PC-3 (cell line): ENCODE measurements at regions of chr2 and their contacts with region 1.

Region 1: DNA sequence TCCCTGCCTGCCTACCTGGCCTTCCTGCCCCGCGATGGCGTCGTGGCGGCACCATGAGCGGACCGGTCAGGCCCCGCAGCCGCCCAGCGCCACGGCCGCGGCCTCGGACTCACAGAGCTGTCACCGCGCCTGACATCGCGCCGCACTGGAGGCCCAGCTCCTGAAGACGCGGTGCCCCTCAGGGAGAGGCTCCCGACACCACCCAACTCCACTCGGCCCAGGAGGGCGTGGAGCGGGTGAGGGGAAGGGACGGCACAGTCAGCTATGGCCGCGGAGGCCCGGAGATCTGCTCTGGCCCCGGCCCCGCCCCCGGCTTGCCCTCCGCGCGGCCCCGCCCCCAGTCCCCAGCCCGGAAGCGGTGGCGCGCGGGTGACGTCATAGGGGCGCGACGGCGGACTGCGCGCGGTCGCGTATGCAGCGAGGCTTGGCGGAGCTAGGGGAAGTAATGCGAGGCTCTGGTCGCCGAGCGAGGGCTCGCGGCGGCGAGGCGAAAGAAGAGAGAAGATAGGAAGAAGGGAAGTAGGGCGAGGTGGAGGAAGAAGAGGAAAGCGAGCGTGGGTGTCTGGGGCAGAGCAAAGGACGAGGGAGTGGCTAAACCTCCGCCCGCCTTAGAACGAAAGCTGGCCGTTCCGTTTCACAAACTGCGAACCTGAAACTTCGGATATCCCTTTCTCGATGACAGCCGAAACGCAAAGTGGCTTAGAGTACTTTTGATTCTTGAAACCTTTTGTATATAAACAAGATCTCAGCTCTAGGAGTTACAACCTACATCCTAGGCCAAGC is at the start of gene SLC35F5:
- DNase-seq: peak; percentile 91
- ATAC-seq: peak; percentile 91
- H3K4me3 ChIP-seq: peak within 1 kb of the TSS; percentile 69
- H3K27ac ChIP-seq: peak within 1 kb of the TSS; percentile 79
- H3K4me1 ChIP-seq: peaks cover 16% of the 10 kb centered on the region
- H3K27me3 ChIP-seq: no peaks in the 10 kb centered on the region
- CTCF ChIP-seq: no peak
- total RNA-seq, gene SLC35F5: 41.1 and 55.3 TPM in 2 replicates

Region 2: DNA sequence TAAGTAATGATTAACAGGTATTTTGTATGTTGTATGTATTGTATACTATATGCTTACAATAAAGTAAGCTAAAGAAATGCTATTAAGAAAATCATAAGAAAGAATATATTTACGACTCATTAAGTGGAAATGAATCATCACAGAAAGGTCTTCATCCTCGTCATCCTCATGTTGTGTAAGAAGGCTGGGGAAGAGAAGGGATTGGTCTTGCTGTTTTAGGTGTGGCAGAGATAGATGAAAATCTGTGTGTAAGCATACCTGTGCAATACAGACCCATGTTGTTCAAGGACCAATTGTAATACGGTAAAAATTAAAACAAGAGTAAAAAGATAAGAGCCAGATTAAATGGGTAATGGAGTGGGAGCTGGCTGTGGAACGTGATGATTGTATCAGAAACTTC is 16.7 kb before region 1 on chr2:
- CTCF ChIA-PET with region 1: no interaction called
- POLR2A ChIA-PET with region 1: no interaction called
- intact Hi-C with region 1: loop called (anchors 1 kb)
- DNase-seq: peak; percentile 35
- ATAC-seq: peak; percentile 33; the same call in 1 of the 2 replicates
- H3K4me3 ChIP-seq: no peak overlapping the region
- H3K27ac ChIP-seq: peak overlapping the region; percentile 30; the same call in 1 of the 2 replicates
- H3K4me1 ChIP-seq: peaks cover 4% of the 10 kb centered on the region
- H3K27me3 ChIP-seq: no peaks in the 10 kb centered on the region
- CTCF ChIP-seq: no peak

Region 3: DNA sequence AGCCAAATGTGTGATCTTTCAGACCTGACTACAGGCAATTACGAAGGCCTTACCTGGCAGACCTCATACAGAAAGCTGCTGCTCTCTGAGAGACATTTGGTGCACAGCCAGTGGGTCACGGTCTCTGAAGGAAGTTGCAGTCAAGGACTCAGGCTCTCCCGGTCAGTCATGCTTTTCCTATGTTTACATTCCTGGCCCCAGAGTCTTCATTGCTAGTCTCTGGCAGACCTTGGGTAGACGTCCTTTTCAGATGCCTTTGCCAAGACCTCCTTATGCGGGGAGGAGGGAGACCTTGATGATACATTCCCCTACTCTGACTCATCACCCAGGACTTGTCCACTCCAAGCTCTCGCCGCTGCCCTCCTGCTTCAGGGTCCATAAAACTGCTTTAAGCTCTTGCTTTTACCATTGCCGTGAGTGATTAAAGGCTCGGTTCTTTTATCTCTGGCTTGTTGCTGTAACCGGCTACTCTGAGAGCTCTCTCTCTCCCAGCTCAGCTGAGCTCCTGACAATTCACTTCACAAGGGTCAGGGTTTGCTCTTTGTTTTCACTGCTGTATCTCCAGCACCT is 61.9 kb after region 1 on chr2:
- CTCF ChIA-PET with region 1: no interaction called
- POLR2A ChIA-PET with region 1: no interaction called
- intact Hi-C with region 1: loop called (anchors 1 kb)
- DNase-seq: peak; percentile 96
- ATAC-seq: peak; percentile 95
- H3K4me3 ChIP-seq: peak overlapping the region; percentile 51
- H3K27ac ChIP-seq: peak overlapping the region; percentile 36
- H3K4me1 ChIP-seq: peaks cover 17% of the 10 kb centered on the region
- H3K27me3 ChIP-seq: no peaks in the 10 kb centered on the region
- CTCF ChIP-seq: no peak

Region 4: DNA sequence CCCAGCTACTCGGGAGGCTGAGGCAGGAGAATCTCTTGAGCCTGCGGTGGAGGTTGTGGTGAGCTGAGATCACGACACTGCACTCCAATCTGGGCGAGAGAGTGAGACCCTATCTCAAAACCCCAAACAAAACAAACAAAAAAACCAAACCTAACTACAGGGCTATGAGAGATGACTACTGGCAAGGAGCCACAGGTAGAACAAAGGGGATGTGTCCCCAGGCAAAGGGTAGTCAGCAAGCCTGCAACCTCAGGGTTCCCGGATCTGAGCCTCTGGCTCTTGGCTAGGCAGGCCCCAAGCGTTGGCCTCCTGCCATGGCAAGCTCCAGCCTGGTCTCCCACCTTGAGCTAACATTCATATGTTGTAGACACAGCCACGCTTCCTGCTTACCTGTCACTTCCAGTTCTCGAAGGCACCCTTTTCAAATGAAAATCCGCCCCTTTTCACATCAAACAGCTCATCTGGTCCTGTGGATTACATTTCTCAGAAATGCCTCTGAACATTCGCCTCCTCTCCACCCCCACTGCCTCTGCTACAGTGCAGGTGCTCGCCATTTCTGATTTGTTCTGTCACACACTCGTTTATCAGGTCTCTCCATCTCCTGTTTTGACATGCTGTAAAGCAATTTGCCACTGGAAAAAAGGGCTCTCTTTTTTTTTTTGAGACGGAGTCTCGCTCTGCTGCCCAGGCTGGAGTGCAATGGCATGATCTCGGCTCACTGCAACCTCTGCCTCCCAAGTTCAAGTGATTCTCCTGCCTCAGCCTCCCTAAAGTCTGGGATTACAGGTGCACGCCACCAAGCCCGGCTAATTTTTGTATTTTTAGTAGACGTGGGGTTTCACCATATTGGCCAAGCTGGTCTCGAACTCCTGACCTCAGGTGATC is 120.2 kb after region 1 on chr2:
- CTCF ChIA-PET with region 1: no interaction called
- POLR2A ChIA-PET with region 1: interaction called, 9 read pairs
- intact Hi-C with region 1: loop called (anchors 2 kb)
- DNase-seq: peak; percentile 99
- ATAC-seq: peak; percentile 80
- H3K4me3 ChIP-seq: no peak overlapping the region
- H3K27ac ChIP-seq: peak overlapping the region; percentile 72
- H3K4me1 ChIP-seq: peaks cover 46% of the 10 kb centered on the region
- H3K27me3 ChIP-seq: no peaks in the 10 kb centered on the region
- CTCF ChIP-seq: no peak

Region 5: DNA sequence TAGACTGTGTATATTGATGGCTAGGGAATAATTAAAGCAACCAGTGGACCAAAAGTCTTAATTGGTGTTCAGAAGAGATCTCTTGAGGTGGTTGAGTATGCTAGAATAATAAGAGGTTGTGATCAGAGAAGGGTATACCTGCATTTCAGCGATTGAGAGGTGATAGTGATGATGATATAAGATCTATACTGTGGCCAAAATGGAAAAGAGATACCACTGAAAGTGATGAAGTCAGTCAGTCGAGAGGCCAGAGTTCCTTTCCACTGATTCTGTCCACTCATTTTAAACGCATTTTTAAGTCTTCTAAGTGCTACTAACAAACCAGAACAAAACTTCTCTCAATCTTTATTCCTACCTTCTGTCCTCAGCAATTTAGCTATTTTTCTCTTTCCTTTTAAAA is 166.2 kb after region 1 on chr2:
- CTCF ChIA-PET with region 1: no interaction called
- POLR2A ChIA-PET with region 1: no interaction called
- intact Hi-C with region 1: no loop called
- DNase-seq: no peak
- ATAC-seq: no peak
- H3K4me3 ChIP-seq: no peak overlapping the region
- H3K27ac ChIP-seq: no peak overlapping the region
- H3K4me1 ChIP-seq: no peaks in the 10 kb centered on the region
- H3K27me3 ChIP-seq: no peaks in the 10 kb centered on the region
- CTCF ChIP-seq: no peak

Region 6: GRCh38 chr2:113965644-113966043 is 209.1 kb after region 1 on chr2:
- CTCF ChIA-PET with region 1: no interaction called
- POLR2A ChIA-PET with region 1: no interaction called
- intact Hi-C with region 1: loop called (anchors 10 kb)
- DNase-seq: peak; percentile 54
- ATAC-seq: peak; percentile 44
- H3K4me3 ChIP-seq: no peak overlapping the region
- H3K27ac ChIP-seq: no peak overlapping the region
- H3K4me1 ChIP-seq: peaks cover 19% of the 10 kb centered on the region
- H3K27me3 ChIP-seq: no peaks in the 10 kb centered on the region
- CTCF ChIP-seq: peak; percentile 74

Region 7: GRCh38 chr2:114108824-114109416 is 352.4 kb after region 1 on chr2:
- CTCF ChIA-PET with region 1: no interaction called
- POLR2A ChIA-PET with region 1: no interaction called
- intact Hi-C with region 1: no loop called
- DNase-seq: no peak
- ATAC-seq: no peak
- H3K4me3 ChIP-seq: no peak overlapping the region
- H3K27ac ChIP-seq: no peak overlapping the region
- H3K4me1 ChIP-seq: no peaks in the 10 kb centered on the region
- H3K27me3 ChIP-seq: peaks cover 43% of the 10 kb centered on the region
- CTCF ChIP-seq: no peak